ENCODE measurements at regions of chr15 and their contacts with region 1.

Region 1: GRCh38 chr15:72199711-72200212 is 2.2 kb upstream of the GRAMD2A start:
- DNase-seq: peak; percentile 83
- ATAC-seq: peak; percentile 63
- H3K4me3 Mint-ChIP-seq: no peak overlapping the region
- H3K27ac Mint-ChIP-seq: no peak overlapping the region
- H3K4me1 Mint-ChIP-seq: peaks cover 12% of the 10 kb centered on the region
- H3K27me3 Mint-ChIP-seq: peaks cover 13% of the 10 kb centered on the region

Region 2: DNA sequence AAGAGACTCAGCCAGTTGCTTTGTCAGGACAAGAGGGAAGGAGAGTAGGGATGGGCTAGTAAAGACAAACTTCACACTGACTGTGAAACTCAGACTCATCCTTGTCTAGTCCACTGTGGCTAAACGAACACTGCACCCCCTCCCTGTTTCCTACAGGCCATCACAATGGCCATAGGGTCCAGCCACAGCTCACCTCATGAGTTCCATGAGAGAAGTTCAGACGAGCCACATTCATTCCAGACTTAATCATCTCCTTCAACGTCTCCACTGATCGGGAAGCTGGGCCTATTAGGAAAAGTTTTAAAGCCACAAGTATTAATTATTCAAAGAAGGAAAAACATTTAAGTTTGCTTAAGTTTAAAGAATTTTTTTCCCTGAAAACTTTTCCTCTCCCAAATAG is 17.5 kb after region 1 on chr15:
- CTCF ChIA-PET with region 1: interaction called, 11 read pairs
- DNase-seq: no peak
- ATAC-seq: no peak
- H3K4me3 Mint-ChIP-seq: no peak overlapping the region
- H3K27ac Mint-ChIP-seq: no peak overlapping the region
- H3K4me1 Mint-ChIP-seq: peaks cover 34% of the 10 kb centered on the region
- H3K27me3 Mint-ChIP-seq: no peaks in the 10 kb centered on the region

Region 3: GRCh38 chr15:72242775-72243370 is 43.1 kb after region 1 on chr15:
- CTCF ChIA-PET with region 1: interaction called, 11 read pairs
- DNase-seq: no peak
- ATAC-seq: no peak
- H3K4me3 Mint-ChIP-seq: no peak overlapping the region
- H3K27ac Mint-ChIP-seq: no peak overlapping the region
- H3K4me1 Mint-ChIP-seq: peaks cover 6% of the 10 kb centered on the region
- H3K27me3 Mint-ChIP-seq: no peaks in the 10 kb centered on the region